ENCODE measurements at regions of chr12 and their contacts with region 1.

Region 1: GRCh38 chr12:110280779-110281548 is at the start of gene ATP2A2:
- DNase-seq: peak; percentile 79 to 93 (median 88)
- H3K4me3 ChIP-seq: peak within 1 kb of the TSS; percentile 68 to 96 (median 90)
- H3K27ac ChIP-seq: peak within 1 kb of the TSS; percentile 81 to 99 (median 96)
- H3K27me3 ChIP-seq: no peaks in the 10 kb centered on the region
- CTCF ChIP-seq: peak in 11 of 56 donors; percentile 1 to 37 (median 13)
- total RNA-seq, gene ATP2A2: 198 to 558 (median 389) TPM

Region 2: DNA sequence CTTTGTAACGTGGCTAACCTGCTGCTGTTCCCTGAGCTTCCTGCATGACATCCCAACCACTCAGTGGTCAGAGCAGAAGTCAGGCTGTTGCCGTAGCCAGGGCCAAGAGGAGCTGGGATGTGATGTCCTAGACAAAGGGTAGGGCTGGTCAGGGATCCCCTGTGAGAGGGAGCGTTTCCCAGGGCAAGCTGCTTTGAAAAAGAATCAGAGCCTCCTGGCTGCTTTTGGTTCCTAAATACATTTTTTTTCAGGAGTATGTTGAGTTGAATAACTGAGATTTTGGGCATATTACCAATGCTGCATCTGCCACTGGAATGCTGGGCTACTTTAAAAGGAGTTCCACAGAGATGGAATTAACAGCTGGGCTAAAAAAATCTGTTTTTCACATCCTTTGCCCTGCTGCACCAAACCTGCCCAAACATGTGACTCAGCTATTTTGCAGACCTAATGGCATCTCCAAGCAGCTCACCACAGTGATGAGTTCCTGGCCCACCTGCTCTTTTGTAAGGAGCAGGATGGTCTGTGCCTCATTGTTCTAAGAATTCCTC is 257.8 kb before region 1 on chr12:
- intact Hi-C with region 1: loop called in 1 of 2 experiments (anchors 10 kb)
- DNase-seq: peak in 1 of 10 donors; percentile 17
- H3K4me3 ChIP-seq: no peak overlapping the region
- H3K27ac ChIP-seq: peak overlapping the region in 58 of 59 donors; percentile 31 to 95 (median 86)
- H3K27me3 ChIP-seq: no peaks in the 10 kb centered on the region
- CTCF ChIP-seq: no peak

Region 3: GRCh38 chr12:110100315-110100970 is 180.5 kb before region 1 on chr12:
- intact Hi-C with region 1: loop called in 1 of 2 experiments (anchors 5 kb)
- DNase-seq: peak; percentile 61 to 88 (median 70)
- H3K4me3 ChIP-seq: peak overlapping the region in 11 of 59 donors; percentile 1 to 27 (median 11)
- H3K27ac ChIP-seq: peak overlapping the region in 58 of 59 donors; percentile 25 to 91 (median 78)
- H3K27me3 ChIP-seq: no peaks in the 10 kb centered on the region
- CTCF ChIP-seq: peak; percentile 78 to 98 (median 94)

Region 4: GRCh38 chr12:110124184-110124995 is 156.6 kb before region 1 on chr12 and contains the start of gene IFT81:
- intact Hi-C with region 1: loop called (anchors 5 to 10 kb)
- DNase-seq: peak; percentile 88 to 97 (median 94)
- H3K4me3 ChIP-seq: peak within 1 kb of the TSS; percentile 66 to 100 (median 95)
- H3K27ac ChIP-seq: peak within 1 kb of the TSS in 58 of 59 donors; percentile 44 to 97 (median 90)
- H3K27me3 ChIP-seq: no peaks in the 10 kb centered on the region
- CTCF ChIP-seq: peak in 22 of 56 donors; percentile 8 to 52 (median 22)
- total RNA-seq, gene IFT81: 12.0 to 29.3 (median 19.0) TPM

Region 5: GRCh38 chr12:110224379-110225304 is 56.3 kb before region 1 on chr12:
- intact Hi-C with region 1: loop called (anchors 2 kb)
- DNase-seq: peak in 2 of 10 donors; percentile 20 to 33
- H3K4me3 ChIP-seq: peak overlapping the region; percentile 12 to 68 (median 47)
- H3K27ac ChIP-seq: peak overlapping the region in 57 of 59 donors; percentile 2 to 93 (median 80)
- H3K27me3 ChIP-seq: no peaks in the 10 kb centered on the region
- CTCF ChIP-seq: peak; percentile 35 to 70 (median 56)

Region 6: GRCh38 chr12:110431957-110432587 is 151.1 kb after region 1 on chr12:
- intact Hi-C with region 1: loop called in 1 of 2 experiments (anchors 10 kb)
- DNase-seq: no peak
- H3K4me3 ChIP-seq: peak overlapping the region; percentile 26 to 73 (median 59)
- H3K27ac ChIP-seq: peak overlapping the region in 52 of 59 donors; percentile 9 to 84 (median 71)
- H3K27me3 ChIP-seq: no peaks in the 10 kb centered on the region
- CTCF ChIP-seq: no peak